ENCODE measurements at regions of chr1 and their contacts with region 1.

Region 1: DNA sequence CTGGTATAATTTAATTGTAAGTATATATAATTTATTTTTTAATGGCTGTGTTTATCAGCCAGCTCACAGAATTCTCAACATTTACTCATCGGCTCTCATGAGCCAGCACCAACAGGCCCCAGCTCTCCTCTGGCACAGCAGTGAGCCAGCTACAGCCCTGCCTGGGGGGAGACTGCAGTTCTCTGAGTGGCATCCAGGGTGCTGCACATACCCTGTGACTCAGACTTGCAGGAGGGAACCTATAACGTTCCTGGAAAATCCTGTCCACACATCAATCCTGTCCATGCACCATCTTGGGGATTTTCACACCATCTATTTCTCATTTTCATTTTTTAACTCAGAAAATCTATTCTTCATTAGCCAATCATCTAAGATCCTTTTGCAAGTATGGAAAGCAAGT is 36.5 kb downstream of the FHAD1 start:
- DNase-seq: no peak
- H3K4me3 ChIP-seq: no peak overlapping the region
- H3K27me3 ChIP-seq: peaks cover 2% of the 10 kb centered on the region
- CTCF ChIP-seq: no peak

Region 2: DNA sequence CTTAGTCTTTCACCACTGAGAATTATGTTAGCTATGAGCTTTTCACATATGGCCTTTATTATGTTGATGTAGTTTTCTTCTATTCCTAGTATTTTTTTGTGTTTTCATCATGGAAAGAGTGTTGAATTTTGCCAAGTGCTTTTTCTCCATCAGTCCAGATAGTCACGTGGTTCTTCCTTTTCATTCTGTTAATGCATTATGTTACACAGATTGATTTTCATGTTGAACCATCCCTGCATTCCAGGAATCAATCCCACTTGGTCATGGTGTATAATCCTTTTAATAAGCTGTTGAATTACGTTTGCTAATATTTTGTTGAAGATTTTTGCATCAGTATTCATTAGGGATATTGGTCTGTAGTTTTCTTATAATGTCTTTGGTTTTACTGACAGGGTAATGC is 18.8 kb before region 1 on chr1:
- CTCF ChIA-PET with region 1: no interaction called
- POLR2A ChIA-PET with region 1: no interaction called
- DNase-seq: no peak
- H3K4me3 ChIP-seq: no peak overlapping the region
- H3K27me3 ChIP-seq: no peaks in the 10 kb centered on the region
- CTCF ChIP-seq: no peak

Region 3: DNA sequence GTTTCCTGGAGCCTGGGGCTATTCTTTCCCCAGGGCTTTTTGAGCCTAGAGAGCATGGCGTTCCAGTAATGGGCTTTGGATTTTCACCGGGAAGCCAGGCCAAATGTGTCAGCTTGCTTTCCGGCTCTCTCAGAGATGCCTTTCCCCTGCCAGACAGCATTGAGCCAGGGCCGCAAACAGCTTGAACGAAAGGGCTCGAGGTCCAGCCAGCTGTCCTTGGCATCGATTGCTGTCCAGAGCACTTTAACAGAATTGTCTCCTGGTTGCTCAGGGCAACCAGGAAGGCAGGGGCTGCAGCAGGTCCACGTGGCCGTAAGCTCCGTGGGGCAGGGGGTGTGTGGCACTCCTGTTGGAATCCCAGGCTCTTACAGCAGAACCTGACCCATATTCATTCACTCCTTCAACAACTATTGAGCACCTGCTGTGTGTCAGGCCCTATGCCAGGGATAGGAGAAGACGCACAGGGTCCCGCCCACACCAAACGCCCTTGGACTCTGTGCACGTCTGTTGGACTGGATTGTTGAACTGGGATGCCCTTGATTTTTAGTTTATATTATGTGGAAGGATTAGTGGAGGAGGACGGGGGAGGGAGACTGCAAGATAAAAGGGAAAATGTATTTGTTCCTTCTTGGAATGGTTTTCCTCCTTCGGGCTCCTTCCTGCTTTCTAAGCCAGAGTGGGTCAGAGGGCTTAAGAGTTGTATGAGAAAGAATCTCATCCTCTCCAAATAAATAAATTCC is 87.4 kb after region 1 on chr1:
- CTCF ChIA-PET with region 1: no interaction called
- POLR2A ChIA-PET with region 1: no interaction called
- DNase-seq: no peak
- H3K4me3 ChIP-seq: no peak overlapping the region
- H3K27me3 ChIP-seq: no peaks in the 10 kb centered on the region
- CTCF ChIP-seq: no peak

Region 4: DNA sequence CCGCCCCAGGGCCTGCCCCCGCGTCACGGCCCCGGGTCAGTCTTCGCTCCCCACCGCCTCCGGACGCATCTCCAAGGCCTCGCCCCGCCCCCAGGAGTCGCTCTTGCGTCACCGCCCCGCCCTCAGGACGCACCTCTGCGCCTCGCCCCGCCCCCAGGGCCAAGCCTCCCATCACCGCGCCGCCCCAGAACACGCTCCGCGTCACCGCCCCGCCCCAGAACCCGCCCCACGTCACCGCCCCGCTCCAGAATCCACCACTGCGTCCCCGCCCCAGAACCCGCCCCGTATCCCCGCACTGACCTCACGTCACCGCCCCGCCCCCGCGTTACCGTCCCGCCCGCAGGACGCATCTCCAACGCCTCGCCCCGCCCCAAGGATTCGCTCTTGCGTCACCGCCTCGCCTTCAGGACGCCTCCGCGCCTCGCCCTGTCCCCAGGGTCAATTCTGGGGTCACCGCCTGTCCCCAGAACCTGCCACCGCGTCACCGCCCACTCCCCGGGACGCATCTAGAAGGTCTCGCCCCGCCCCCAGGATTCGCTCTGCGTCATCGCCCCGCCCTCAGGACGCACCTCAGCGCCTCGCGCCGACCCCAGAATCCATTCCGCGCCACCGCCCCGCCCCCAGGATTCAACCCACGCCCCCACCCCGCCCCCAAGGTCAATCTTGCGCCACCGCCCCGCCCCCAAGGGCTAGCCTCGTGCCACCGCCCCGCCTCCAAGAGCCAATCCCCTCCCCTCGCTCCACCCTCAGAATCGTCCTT is 240.9 kb after region 1 on chr1:
- CTCF ChIA-PET with region 1: no interaction called
- POLR2A ChIA-PET with region 1: interaction called, 19 read pairs
- DNase-seq: peak; percentile 75
- H3K4me3 ChIP-seq: peak overlapping the region; percentile 82
- H3K27me3 ChIP-seq: no peaks in the 10 kb centered on the region
- CTCF ChIP-seq: no peak

Measured in BJ (cell line).